Activated T-helper 1 cell treated with anti-CD3 and anti-CD28 coated beads, Interleukin-12 subunit alpha, Interleukin-12 subunit beta, Interleukin-2, Interleukin-4 antibody, amounts not matched to agents 30 ng/mL and 10 ng/mL and 1 ng/mL, durations not matched to agents 14 hours and 24 hours and 36 hours (primary cell): ENCODE measurements at regions of chr6 and their contacts with region 1.

Region 1: GRCh38 chr6:125790358-125791150 is at the start of gene NCOA7:
- DNase-seq: peak; percentile 78
- H3K4me3 Mint-ChIP-seq: peak within 1 kb of the TSS; percentile 91
- H3K27ac Mint-ChIP-seq: peak within 1 kb of the TSS; percentile 95
- H3K4me1 Mint-ChIP-seq: peaks cover 50% of the 10 kb centered on the region
- H3K27me3 Mint-ChIP-seq: no peaks in the 10 kb centered on the region
- total RNA-seq, gene NCOA7: 56.1 and 59.3 TPM in 2 replicates

Region 2: DNA sequence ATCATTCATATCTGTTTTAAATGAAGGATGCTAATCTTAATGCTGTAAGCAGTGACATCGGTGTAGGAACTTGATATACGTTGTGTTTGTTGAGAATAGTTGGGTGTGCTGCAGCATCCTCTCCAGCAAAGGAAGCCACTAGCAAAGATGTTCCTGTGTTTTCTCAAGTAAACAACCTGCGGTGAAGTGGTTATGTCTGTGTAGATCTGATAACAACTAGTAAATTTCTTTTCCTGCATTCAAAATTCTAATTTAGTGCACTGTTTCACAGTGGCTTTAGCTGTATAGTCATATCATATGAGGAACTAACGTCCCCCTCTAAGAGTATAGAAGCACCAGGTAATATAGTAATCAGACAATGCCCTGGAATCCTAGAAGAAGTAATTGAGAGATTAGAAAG is 38.9 kb after region 1 on chr6:
- intact Hi-C with region 1: loop called (anchors 1 kb)
- DNase-seq: peak; percentile 19
- H3K4me3 Mint-ChIP-seq: no peak overlapping the region
- H3K27ac Mint-ChIP-seq: peak overlapping the region; percentile 42
- H3K4me1 Mint-ChIP-seq: peaks cover 62% of the 10 kb centered on the region
- H3K27me3 Mint-ChIP-seq: no peaks in the 10 kb centered on the region

Region 3: DNA sequence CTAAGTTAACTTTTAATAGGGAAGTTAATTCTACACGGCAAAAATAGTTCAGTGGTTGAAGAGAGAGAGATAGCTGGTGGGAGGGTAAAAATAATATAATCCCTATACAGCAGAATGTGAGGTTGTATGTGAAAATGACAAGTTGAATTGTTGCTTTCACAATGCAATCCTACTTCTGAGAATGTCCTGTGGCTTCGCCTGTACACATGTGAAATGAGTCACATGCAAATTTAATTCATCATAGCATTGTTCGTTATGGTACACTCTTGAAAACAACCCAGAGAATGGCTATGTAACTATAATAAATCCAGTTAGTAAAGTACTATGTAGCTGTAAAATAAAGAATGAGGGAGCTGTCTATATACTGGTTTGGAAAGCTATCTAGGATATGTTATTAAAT is 120.0 kb after region 1 on chr6:
- intact Hi-C with region 1: loop called (anchors 1 kb)
- DNase-seq: no peak
- H3K4me3 Mint-ChIP-seq: peak overlapping the region; percentile 40
- H3K27ac Mint-ChIP-seq: peak overlapping the region; percentile 74
- H3K4me1 Mint-ChIP-seq: peaks cover 47% of the 10 kb centered on the region
- H3K27me3 Mint-ChIP-seq: no peaks in the 10 kb centered on the region

Region 4: DNA sequence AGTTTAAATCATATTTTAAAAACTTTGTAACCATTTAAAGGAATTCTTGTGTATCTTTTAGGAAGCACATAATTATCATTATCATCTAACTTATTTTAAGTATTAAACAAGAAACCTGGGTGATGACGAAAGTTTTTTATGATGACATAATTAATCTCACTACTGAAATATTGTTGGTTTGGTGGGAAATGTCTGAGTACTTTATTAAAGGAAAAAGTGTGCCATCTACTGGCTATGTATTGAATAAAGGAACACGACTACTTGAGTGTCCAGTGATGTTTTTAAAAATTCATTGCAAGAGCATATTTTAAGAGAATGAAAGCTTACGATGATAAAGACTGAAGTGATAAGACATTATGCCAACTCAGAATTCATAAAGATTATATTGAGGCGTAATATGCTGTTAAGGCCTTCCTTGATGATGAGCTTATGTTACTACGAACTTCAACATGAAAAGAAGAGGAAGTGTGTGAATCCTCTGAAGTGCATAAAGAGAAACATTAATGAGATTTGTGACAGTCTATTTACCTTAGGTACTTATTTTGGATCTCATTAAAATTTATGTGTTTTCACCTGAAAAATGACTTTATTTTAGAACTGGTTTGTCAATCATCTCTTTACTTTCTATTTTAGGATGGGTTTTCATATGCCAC is 183.8 kb after region 1 on chr6:
- intact Hi-C with region 1: loop called (anchors 1 kb)
- DNase-seq: no peak
- H3K4me3 Mint-ChIP-seq: no peak overlapping the region
- H3K27ac Mint-ChIP-seq: peak overlapping the region; percentile 10
- H3K4me1 Mint-ChIP-seq: peaks cover 6% of the 10 kb centered on the region
- H3K27me3 Mint-ChIP-seq: no peaks in the 10 kb centered on the region

Region 5: DNA sequence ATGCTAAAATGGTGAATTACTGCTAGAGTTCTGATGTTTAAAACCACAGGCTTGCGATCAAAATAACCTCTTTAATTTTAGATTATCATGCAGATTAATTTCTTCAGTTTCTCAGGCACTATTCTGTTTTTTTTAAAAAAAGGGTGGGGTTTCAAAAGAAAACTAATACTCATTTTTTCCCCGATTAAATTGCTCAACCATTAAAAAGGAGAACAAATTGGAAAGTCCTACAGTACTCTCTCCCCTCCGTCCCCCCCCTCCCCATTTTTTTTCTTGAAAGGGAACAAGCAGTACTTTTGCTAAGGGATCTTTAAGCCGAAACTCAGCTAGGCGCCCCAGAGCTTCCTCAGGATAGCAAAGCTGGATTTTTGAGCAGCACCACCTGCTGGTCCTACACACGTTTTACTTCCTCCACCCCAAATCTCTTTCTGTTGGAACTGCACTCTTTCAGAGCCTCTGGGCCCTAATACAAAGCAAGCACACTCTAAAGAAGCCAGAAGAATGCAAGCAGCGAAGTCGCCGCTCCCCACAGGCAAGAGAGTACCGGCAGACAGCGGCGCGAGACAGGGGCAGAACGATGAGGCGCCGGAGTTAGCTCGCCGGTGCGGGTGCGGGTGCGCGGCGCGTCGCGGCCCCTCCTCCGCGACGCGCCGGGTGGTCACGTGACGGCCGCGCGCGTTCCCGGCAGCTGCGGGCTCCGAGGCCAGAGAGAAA is 1475.8 kb after region 1 on chr6 and contains the start of gene RNF146:
- intact Hi-C with region 1: loop called (anchors 5 kb)
- DNase-seq: peak; percentile 63
- H3K4me3 Mint-ChIP-seq: peak within 1 kb of the TSS; percentile 100
- H3K27ac Mint-ChIP-seq: peak within 1 kb of the TSS; percentile 100
- H3K4me1 Mint-ChIP-seq: peaks cover 42% of the 10 kb centered on the region
- H3K27me3 Mint-ChIP-seq: peaks cover 9% of the 10 kb centered on the region
- total RNA-seq, gene RNF146: 18.3 and 20.5 TPM in 2 replicates